ENCODE measurements at regions of chr3 and their contacts with region 1.

Region 1: DNA sequence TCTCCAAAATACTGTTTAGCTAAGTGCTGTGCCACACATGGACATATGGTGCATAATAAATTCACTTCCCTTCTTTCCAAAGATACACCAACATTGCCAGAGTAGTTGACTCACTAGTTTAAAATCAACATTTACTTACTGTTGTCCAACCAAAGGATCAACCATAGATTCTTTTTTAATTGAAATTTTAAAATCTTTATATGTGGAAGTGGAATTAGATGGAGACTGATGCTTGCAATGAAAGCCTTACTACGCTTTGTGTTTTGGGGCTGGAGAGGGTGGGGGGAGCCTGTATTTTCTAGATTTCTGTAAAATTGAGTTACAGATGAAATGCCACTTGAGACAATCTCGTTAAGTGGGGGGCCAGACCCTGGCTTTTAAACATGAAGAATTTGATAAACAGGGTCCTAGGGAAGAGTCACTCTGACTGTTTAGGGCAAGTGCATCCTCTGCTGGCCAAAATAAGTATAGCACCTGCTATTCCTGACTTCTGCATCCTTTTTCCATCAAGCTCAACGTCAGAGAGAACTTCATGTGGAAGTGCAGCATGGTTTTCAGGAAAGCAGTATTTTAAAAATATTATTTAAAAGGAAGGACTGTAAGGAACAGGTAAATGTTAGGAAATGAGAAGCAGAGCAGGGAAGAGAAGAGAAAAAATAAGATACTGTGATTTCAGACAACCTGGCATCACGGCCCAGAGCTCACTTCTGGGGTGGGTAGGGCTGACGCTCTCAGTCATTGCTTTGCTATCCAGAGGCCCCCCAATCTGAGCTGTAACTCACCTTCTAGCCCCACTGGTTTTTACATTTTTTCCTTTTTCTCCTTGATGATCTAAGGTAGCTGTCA is 76.7 kb downstream of the BOC start:
- DNase-seq: peak; percentile 58 to 74
- ATAC-seq: peak; percentile 55 to 77
- H3K4me3 ChIP-seq: no peak overlapping the region
- H3K27ac ChIP-seq: peak overlapping the region; percentile 74 to 89
- H3K4me1 ChIP-seq: peaks cover 25% of the 10 kb centered on the region
- CTCF ChIP-seq: peak; percentile 98
- EP300 ChIP-seq: no peak
- POLR2A ChIP-seq: no peak
- RAD21 ChIP-seq: peak; percentile 98 to 99

Region 2: DNA sequence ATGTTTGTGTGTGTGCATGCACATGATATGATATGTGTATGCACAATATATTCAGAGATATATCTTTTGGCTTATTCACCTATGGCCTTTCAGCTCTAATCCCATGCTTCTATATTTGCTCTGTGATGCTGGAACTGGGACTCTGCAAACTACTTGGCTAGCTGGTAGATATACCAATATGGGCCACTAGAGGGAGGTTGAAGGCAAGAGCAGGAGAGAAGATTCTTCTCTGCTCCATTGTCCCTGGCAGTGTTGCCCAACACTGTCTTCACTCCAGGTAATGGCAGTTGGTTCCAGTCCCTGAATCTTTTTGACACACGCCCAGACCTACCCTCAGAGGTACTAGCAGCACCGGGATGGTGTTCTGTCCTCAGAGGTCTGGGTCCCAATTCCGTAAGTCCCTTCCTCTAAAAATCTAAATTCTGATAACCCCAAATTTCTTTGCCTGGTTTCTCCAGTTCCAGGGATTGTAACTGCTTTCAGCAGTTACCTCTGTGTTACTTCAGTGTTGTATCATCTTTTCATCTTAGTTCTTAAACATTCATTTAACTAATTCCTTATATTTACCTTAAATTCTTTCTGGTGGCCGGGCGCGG is 252.5 kb before region 1 on chr3:
- CTCF ChIA-PET with region 1: interaction called, 23 read pairs
- POLR2A ChIA-PET with region 1: no interaction called
- DNase-seq: peak; percentile 64 to 73
- ATAC-seq: peak; percentile 99 to 100
- H3K4me3 ChIP-seq: no peak overlapping the region
- H3K27ac ChIP-seq: no peak overlapping the region
- H3K4me1 ChIP-seq: no peaks in the 10 kb centered on the region
- CTCF ChIP-seq: peak; percentile 74
- EP300 ChIP-seq: no peak
- POLR2A ChIP-seq: no peak
- RAD21 ChIP-seq: peak; percentile 62 to 73

Region 3: GRCh38 chr3:113043686-113044085 is 244.3 kb before region 1 on chr3:
- CTCF ChIA-PET with region 1: interaction called, 22 read pairs
- POLR2A ChIA-PET with region 1: no interaction called
- DNase-seq: no peak
- ATAC-seq: no peak
- H3K4me3 ChIP-seq: no peak overlapping the region
- H3K27ac ChIP-seq: no peak overlapping the region
- H3K4me1 ChIP-seq: no peaks in the 10 kb centered on the region
- CTCF ChIP-seq: no peak
- EP300 ChIP-seq: no peak
- POLR2A ChIP-seq: no peak
- RAD21 ChIP-seq: no peak

Region 4: GRCh38 chr3:113051302-113051711 is 236.7 kb before region 1 on chr3:
- CTCF ChIA-PET with region 1: interaction called, 130 read pairs
- POLR2A ChIA-PET with region 1: no interaction called
- DNase-seq: peak; percentile 74 to 76
- ATAC-seq: peak; percentile 81 to 92
- H3K4me3 ChIP-seq: no peak overlapping the region
- H3K27ac ChIP-seq: peak overlapping the region; percentile 46 to 71; a peak in 5 of 6 replicates
- H3K4me1 ChIP-seq: peaks cover 34% of the 10 kb centered on the region
- CTCF ChIP-seq: peak; percentile 95
- EP300 ChIP-seq: no peak
- POLR2A ChIP-seq: no peak
- RAD21 ChIP-seq: peak; percentile 97 to 99

Region 5: GRCh38 chr3:113136071-113136470 is 152.0 kb before region 1 on chr3:
- CTCF ChIA-PET with region 1: interaction called, 20 read pairs
- POLR2A ChIA-PET with region 1: no interaction called
- DNase-seq: peak; percentile 18 to 38
- ATAC-seq: peak in 1 of 2 experiments; percentile 71; a peak in 3 of 6 replicates
- H3K4me3 ChIP-seq: no peak overlapping the region
- H3K27ac ChIP-seq: no peak overlapping the region
- H3K4me1 ChIP-seq: no peaks in the 10 kb centered on the region
- CTCF ChIP-seq: peak; percentile 63
- EP300 ChIP-seq: no peak
- POLR2A ChIP-seq: no peak
- RAD21 ChIP-seq: peak; percentile 65 to 72

Region 6: GRCh38 chr3:113194823-113195401 is 93.1 kb before region 1 on chr3:
- CTCF ChIA-PET with region 1: interaction called, 10 read pairs
- POLR2A ChIA-PET with region 1: no interaction called
- DNase-seq: no peak
- ATAC-seq: no peak
- H3K4me3 ChIP-seq: no peak overlapping the region
- H3K27ac ChIP-seq: no peak overlapping the region
- H3K4me1 ChIP-seq: no peaks in the 10 kb centered on the region
- CTCF ChIP-seq: no peak
- EP300 ChIP-seq: no peak
- POLR2A ChIP-seq: no peak
- RAD21 ChIP-seq: no peak

Region 7: GRCh38 chr3:113275929-113276750 is 11.9 kb before region 1 on chr3:
- CTCF ChIA-PET with region 1: interaction called, 36 read pairs
- POLR2A ChIA-PET with region 1: no interaction called
- DNase-seq: no peak
- ATAC-seq: no peak; a peak in 1 of 6 replicates
- H3K4me3 ChIP-seq: no peak overlapping the region
- H3K27ac ChIP-seq: peak overlapping the region in 1 of 2 experiments; percentile 10; a peak in 1 of 6 replicates
- H3K4me1 ChIP-seq: no peaks in the 10 kb centered on the region
- CTCF ChIP-seq: no peak
- EP300 ChIP-seq: no peak
- POLR2A ChIP-seq: no peak
- RAD21 ChIP-seq: no peak

Region 8: DNA sequence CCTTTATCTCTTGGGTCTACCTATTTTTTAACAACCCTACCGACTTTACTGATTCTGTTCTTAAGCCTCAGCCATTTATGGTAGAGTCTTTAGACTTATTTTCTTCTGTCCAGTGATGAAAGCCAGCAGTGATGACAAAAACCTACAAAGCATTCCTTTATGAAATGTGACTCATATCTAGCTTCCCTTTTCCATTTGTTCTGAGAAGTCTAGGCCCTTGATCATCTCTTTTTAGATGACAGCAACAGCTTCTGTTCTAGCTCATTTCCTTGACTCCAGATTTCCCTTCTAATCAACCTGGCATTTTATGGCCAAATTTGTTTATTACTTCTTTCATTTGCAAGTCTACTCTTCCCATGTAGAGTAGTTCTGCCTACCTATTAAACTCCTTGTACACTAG is 117.2 kb after region 1 on chr3:
- CTCF ChIA-PET with region 1: no interaction called
- POLR2A ChIA-PET with region 1: no interaction called
- DNase-seq: no peak
- ATAC-seq: no peak
- H3K4me3 ChIP-seq: no peak overlapping the region
- H3K27ac ChIP-seq: no peak overlapping the region
- H3K4me1 ChIP-seq: no peaks in the 10 kb centered on the region
- CTCF ChIP-seq: no peak
- EP300 ChIP-seq: no peak
- POLR2A ChIP-seq: no peak
- RAD21 ChIP-seq: no peak